ENCODE measurements at regions of chr1 and their contacts with region 1.

Region 1: GRCh38 chr1:23777979-23778814 is at the start of gene PITHD1:
- DNase-seq: peak; percentile 83
- ATAC-seq: peak; percentile 86
- H3K4me3 ChIP-seq: peak within 1 kb of the TSS; percentile 61 to 85 (median 82)
- H3K27ac ChIP-seq: peak within 1 kb of the TSS; percentile 91
- H3K4me1 ChIP-seq: peaks cover 59% of the 10 kb centered on the region
- H3K27me3 ChIP-seq: no peaks in the 10 kb centered on the region; a peak in 1 of 5 replicates
- CTCF ChIP-seq: no peak
- EP300 ChIP-seq: no peak
- POLR2A ChIP-seq: peak; percentile 84 to 99
- RAD21 ChIP-seq: peak; percentile 28; the same call in 1 of the 2 replicates
- total RNA-seq, gene PITHD1: 37.3 and 44.9 TPM in 2 replicates

Region 2: GRCh38 chr1:23591460-23592208 is 186.6 kb before region 1 on chr1:
- CTCF ChIA-PET with region 1: no interaction called
- POLR2A ChIA-PET with region 1: no interaction called
- in situ Hi-C with region 1: no loop called
- intact Hi-C with region 1: no loop called
- DNase-seq: peak; percentile 85
- ATAC-seq: peak; percentile 81
- H3K4me3 ChIP-seq: peak overlapping the region; percentile 1 to 63 (median 30); a peak in 4 of 6 replicates
- H3K27ac ChIP-seq: peak overlapping the region; percentile 53
- H3K4me1 ChIP-seq: peaks cover 98% of the 10 kb centered on the region
- H3K27me3 ChIP-seq: 0 out of 5 replicates have a peak, but pooled peaks cover 0 to 2% of the 10 kb centered on the region in 2 experiments
- CTCF ChIP-seq: no peak
- EP300 ChIP-seq: 0 out of 4 replicates have a peak, but pooled peaks of 1 of the 2 experiments have one; percentile 52
- POLR2A ChIP-seq: no peak
- RAD21 ChIP-seq: no peak

Region 3: GRCh38 chr1:23691499-23692307 is 86.5 kb before region 1 on chr1 and contains the start of gene RPL11:
- CTCF ChIA-PET with region 1: no interaction called
- POLR2A ChIA-PET with region 1: interaction called, 14 read pairs
- in situ Hi-C with region 1: no loop called
- intact Hi-C with region 1: no loop called
- DNase-seq: peak; percentile 92
- ATAC-seq: peak; percentile 98
- H3K4me3 ChIP-seq: peak within 1 kb of the TSS; percentile 96 to 100 (median 96)
- H3K27ac ChIP-seq: peak within 1 kb of the TSS; percentile 86
- H3K4me1 ChIP-seq: peaks cover 46% of the 10 kb centered on the region
- H3K27me3 ChIP-seq: no peaks in the 10 kb centered on the region; a peak in 1 of 5 replicates
- CTCF ChIP-seq: peak; percentile 84
- EP300 ChIP-seq: 0 out of 4 replicates have a peak, but pooled peaks of 1 of the 2 experiments have one; percentile 38
- POLR2A ChIP-seq: peak; percentile 94 to 99
- RAD21 ChIP-seq: peak; percentile 38; the same call in 1 of the 2 replicates
- total RNA-seq, gene RPL11: 2,010 and 2,638 TPM in 2 replicates

Region 4: GRCh38 chr1:23763041-23763577 is 15.1 kb before region 1 on chr1:
- CTCF ChIA-PET with region 1: no interaction called
- POLR2A ChIA-PET with region 1: interaction called, 12 read pairs
- in situ Hi-C with region 1: no loop called
- intact Hi-C with region 1: no loop called
- DNase-seq: no peak
- ATAC-seq: no peak
- H3K4me3 ChIP-seq: no peak overlapping the region
- H3K27ac ChIP-seq: no peak overlapping the region
- H3K4me1 ChIP-seq: peaks cover 11% of the 10 kb centered on the region
- H3K27me3 ChIP-seq: no peaks in the 10 kb centered on the region
- CTCF ChIP-seq: no peak
- EP300 ChIP-seq: no peak
- POLR2A ChIP-seq: no peak
- RAD21 ChIP-seq: no peak

Region 5: GRCh38 chr1:23800400-23801337 is 22.5 kb after region 1 on chr1 and contains the start of gene GALE:
- CTCF ChIA-PET with region 1: no interaction called
- POLR2A ChIA-PET with region 1: interaction called, 154 read pairs
- in situ Hi-C with region 1: no loop called
- intact Hi-C with region 1: no loop called
- DNase-seq: peak; percentile 89
- ATAC-seq: peak; percentile 75
- H3K4me3 ChIP-seq: peak within 1 kb of the TSS; percentile 65 to 92 (median 90)
- H3K27ac ChIP-seq: peak within 1 kb of the TSS; percentile 95
- H3K4me1 ChIP-seq: peaks cover 66% of the 10 kb centered on the region
- H3K27me3 ChIP-seq: no peaks in the 10 kb centered on the region; a peak in 1 of 5 replicates
- CTCF ChIP-seq: no peak
- EP300 ChIP-seq: peak in 1 of 2 experiments; percentile 34; a peak in 1 of 4 replicates
- POLR2A ChIP-seq: peak in 1 of 2 experiments; percentile 59; a peak in 2 of 4 replicates
- RAD21 ChIP-seq: peak; percentile 60; the same call in 1 of the 2 replicates
- total RNA-seq, gene GALE: 85.2 and 86.6 TPM in 2 replicates

Region 6: GRCh38 chr1:23867953-23868556 is 89.9 kb after region 1 on chr1 and contains the start of gene FUCA1:
- CTCF ChIA-PET with region 1: no interaction called
- POLR2A ChIA-PET with region 1: interaction called, 7 read pairs
- in situ Hi-C with region 1: no loop called
- intact Hi-C with region 1: loop called (anchors 10 kb)
- DNase-seq: peak; percentile 89
- ATAC-seq: peak; percentile 96
- H3K4me3 ChIP-seq: peak within 1 kb of the TSS; percentile 67 to 81 (median 81)
- H3K27ac ChIP-seq: peak within 1 kb of the TSS; percentile 37
- H3K4me1 ChIP-seq: peaks cover 33% of the 10 kb centered on the region
- H3K27me3 ChIP-seq: no peaks in the 10 kb centered on the region; a peak in 2 of 5 replicates
- CTCF ChIP-seq: peak; percentile 93
- EP300 ChIP-seq: no peak
- POLR2A ChIP-seq: peak in 1 of 2 experiments; percentile 91; a peak in 2 of 4 replicates
- RAD21 ChIP-seq: peak; percentile 68
- total RNA-seq, gene FUCA1: 14.9 and 33.6 TPM in 2 replicates

Region 7: GRCh38 chr1:24216276-24217074 is 438.3 kb after region 1 on chr1:
- CTCF ChIA-PET with region 1: no interaction called
- POLR2A ChIA-PET with region 1: no interaction called
- in situ Hi-C with region 1: no loop called
- intact Hi-C with region 1: no loop called
- DNase-seq: no peak
- ATAC-seq: peak; percentile 41; the same call in 2 of the 3 replicates
- H3K4me3 ChIP-seq: no peak overlapping the region
- H3K27ac ChIP-seq: no peak overlapping the region
- H3K4me1 ChIP-seq: no peaks in the 10 kb centered on the region
- H3K27me3 ChIP-seq: peaks cover 1 to 40% of the 10 kb centered on the region in 2 experiments; a peak in 3 of 5 replicates
- CTCF ChIP-seq: no peak
- EP300 ChIP-seq: no peak
- POLR2A ChIP-seq: no peak
- RAD21 ChIP-seq: no peak

Measured in HepG2 (cell line).